ENCODE measurements at regions of chr10 and their contacts with region 1.

Region 1: GRCh38 chr10:125982260-125982948 is 86.0 kb downstream of the FANK1 start:
- DNase-seq: peak; percentile 17
- H3K4me3 ChIP-seq: no peak overlapping the region
- H3K27ac ChIP-seq: no peak overlapping the region
- H3K4me1 ChIP-seq: no peaks in the 10 kb centered on the region
- H3K27me3 ChIP-seq: no peaks in the 10 kb centered on the region
- CTCF ChIP-seq: peak; percentile 63 to 76 (median 66)
- EP300 ChIP-seq: no peak
- POLR2A ChIP-seq: no peak

Region 2: DNA sequence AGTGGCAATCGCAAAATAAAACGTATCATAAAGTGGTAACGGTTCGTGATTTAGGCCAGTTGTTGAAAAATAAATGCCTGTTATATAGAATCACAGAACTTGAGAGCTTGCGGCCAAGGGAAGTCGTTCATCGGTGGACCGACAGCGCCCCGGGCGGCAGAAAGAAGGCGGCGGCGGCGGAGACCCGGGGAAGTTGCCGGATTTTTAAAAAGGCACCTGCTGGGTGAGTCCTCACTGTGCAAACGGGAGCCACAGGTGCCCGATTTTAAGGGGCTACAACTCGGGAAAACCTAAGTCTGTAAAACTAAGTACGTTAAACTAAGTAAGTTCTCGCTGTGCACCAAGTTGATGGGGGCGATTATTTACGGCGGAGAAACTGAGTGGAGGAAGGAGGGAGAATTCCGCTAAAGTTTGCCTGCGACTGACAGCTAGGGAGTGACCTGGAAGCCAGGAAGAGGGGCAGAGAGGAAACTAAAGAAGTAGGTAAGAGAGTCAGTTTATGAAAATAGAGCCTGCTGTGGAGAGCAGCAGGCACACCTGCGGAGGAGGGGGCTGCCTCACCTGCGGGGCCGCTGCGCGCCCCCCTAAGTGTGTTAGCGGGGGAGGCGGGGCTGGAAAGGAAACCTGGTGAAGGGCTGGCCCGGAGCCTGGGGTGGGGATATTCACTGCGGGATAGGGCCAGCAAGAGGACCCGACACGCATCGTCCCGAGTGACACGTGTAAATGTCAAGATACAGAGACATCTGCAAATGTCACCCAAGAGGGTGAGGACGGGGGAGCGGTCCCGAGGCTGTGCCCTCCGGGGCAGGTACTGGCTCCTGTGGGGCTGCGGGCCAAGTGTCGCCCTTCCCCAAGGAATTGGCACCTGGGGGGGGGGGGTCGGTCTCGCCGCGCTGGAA is 404.9 kb after region 1 on chr10:
- in situ Hi-C with region 1: loop called in 3 of 4 experiments (anchors 25 kb)
- intact Hi-C with region 1: no loop called
- DNase-seq: peak; percentile 70
- H3K4me3 ChIP-seq: peak overlapping the region in 3 of 4 donors; percentile 38 to 53 (median 41)
- H3K27ac ChIP-seq: no peak overlapping the region
- H3K4me1 ChIP-seq: peaks cover 0 to 19% (median 15%) of the 10 kb centered on the region in 4 donors
- H3K27me3 ChIP-seq: peaks cover 37% of the 10 kb centered on the region
- CTCF ChIP-seq: peak; percentile 60 to 82 (median 78)
- EP300 ChIP-seq: no peak
- POLR2A ChIP-seq: no peak

Region 3: GRCh38 chr10:126749015-126749655 is 766.7 kb after region 1 on chr10:
- in situ Hi-C with region 1: loop called in 1 of 4 experiments (anchors 25 kb)
- intact Hi-C with region 1: loop called (anchors 10 kb)
- DNase-seq: peak; percentile 67
- H3K4me3 ChIP-seq: no peak overlapping the region
- H3K27ac ChIP-seq: no peak overlapping the region
- H3K4me1 ChIP-seq: no peaks in the 10 kb centered on the region
- H3K27me3 ChIP-seq: no peaks in the 10 kb centered on the region
- CTCF ChIP-seq: peak; percentile 30 to 68 (median 54)
- EP300 ChIP-seq: no peak
- POLR2A ChIP-seq: no peak

Region 4: GRCh38 chr10:126754966-126755365 is 772.6 kb after region 1 on chr10:
- in situ Hi-C with region 1: loop called in 1 of 4 experiments (anchors 25 kb)
- intact Hi-C with region 1: no loop called
- DNase-seq: no peak
- H3K4me3 ChIP-seq: no peak overlapping the region
- H3K27ac ChIP-seq: no peak overlapping the region
- H3K4me1 ChIP-seq: no peaks in the 10 kb centered on the region
- H3K27me3 ChIP-seq: no peaks in the 10 kb centered on the region
- CTCF ChIP-seq: no peak
- EP300 ChIP-seq: no peak
- POLR2A ChIP-seq: no peak